Right ventricle myocardium inferior (tissue), 1 donor: ENCODE measurements at regions of chr20 and their contacts with region 1.

Region 1: DNA sequence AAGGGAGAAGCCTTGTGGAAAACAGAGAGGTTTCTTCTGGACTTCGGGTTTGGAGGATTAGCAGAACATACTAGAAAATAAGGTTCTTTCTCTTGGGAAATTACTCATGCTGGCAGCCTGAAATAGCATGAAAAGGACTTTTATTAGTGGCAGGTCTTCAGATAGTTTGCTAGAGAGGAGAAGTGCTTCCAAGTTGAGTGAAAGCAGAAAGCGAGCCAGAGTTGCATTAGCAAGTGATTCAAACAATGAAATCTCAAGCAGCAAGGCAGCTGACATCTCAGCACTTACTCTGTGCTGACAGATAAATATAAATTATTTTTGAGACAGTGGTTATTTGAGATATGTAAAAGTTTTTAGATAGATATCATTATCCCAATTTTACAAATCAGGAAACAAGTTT is 91.9 kb downstream of the PLCB4 start:
- DNase-seq: no peak
- ATAC-seq: peak; percentile 62

Region 2: GRCh38 chr20:8986631-8987030 is 174.1 kb before region 1 on chr20:
- intact Hi-C with region 1: loop called (anchors 5 kb)
- DNase-seq: no peak
- ATAC-seq: no peak

Region 3: GRCh38 chr20:9093218-9093957 is 67.4 kb before region 1 on chr20:
- intact Hi-C with region 1: no loop called
- DNase-seq: no peak
- ATAC-seq: peak; percentile 64

Region 4: DNA sequence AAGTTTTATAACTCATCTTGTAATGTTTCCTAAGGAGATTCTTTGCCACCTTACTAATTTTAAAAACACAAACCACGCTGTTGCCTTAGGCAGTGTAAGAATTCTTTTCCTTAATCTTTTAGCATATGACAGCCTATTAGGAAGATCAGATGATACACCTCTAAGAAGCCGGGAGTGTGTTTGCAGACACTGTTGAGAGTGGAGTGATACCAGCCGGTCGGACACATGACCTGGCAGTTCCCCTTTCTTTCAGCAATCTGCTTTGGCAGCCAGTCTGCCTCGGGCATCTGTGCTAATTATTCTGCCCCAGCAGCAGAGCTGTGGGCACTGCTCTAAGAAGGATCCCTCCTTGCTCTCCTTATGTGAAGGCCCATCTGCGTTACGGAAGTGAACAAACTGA is 41.0 kb before region 1 on chr20:
- intact Hi-C with region 1: loop called (anchors 5 kb)
- DNase-seq: no peak
- ATAC-seq: peak; percentile 96